ENCODE measurements at regions of chr17 and their contacts with region 1.

Region 1: DNA sequence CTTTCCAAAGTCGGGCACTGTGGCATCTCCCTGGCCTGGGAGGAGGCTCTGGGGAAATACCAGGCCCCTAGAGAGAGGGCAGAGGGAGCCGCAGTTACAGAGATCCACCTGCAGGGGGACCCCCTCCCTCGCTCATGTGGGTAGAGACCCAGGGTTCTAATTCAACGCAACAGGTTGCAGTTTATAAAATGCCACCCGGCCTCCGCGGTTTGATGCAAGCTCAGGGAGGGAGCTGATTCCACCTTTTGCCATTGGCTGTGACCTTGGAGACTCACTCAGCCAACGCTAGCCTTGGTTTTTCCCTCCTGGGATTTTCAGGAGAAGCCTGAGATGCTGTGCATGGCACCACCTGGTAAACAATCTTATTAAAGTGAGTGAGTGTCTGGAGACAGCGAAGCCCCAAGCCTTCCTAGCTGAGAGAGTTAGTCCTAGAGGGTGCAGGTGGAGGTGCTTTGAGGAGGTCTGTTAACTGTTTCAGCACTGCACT is 12.1 kb downstream of the TTLL6 start:
- DNase-seq: peak; percentile 55
- H3K4me3 ChIP-seq: no peak overlapping the region
- H3K27ac ChIP-seq: no peak overlapping the region
- H3K4me1 ChIP-seq: no peaks in the 10 kb centered on the region
- CTCF ChIP-seq: peak; percentile 92

Region 2: GRCh38 chr17:48671697-48672171 is 133.2 kb before region 1 on chr17:
- CTCF ChIA-PET with region 1: no interaction called
- POLR2A ChIA-PET with region 1: interaction called, 11 read pairs
- intact Hi-C with region 1: loop called (anchors 5 kb)
- DNase-seq: peak; percentile 38
- H3K4me3 ChIP-seq: no peak overlapping the region
- H3K27ac ChIP-seq: no peak overlapping the region
- H3K4me1 ChIP-seq: no peaks in the 10 kb centered on the region
- CTCF ChIP-seq: peak; percentile 85

Region 3: GRCh38 chr17:48678141-48678971 is 126.6 kb before region 1 on chr17:
- CTCF ChIA-PET with region 1: no interaction called
- POLR2A ChIA-PET with region 1: interaction called, 3 read pairs
- intact Hi-C with region 1: loop called (anchors 5 kb)
- DNase-seq: peak; percentile 54
- H3K4me3 ChIP-seq: no peak overlapping the region
- H3K27ac ChIP-seq: no peak overlapping the region
- H3K4me1 ChIP-seq: no peaks in the 10 kb centered on the region
- CTCF ChIP-seq: peak; percentile 91

Region 4: GRCh38 chr17:48724251-48725003 is 80.5 kb before region 1 on chr17:
- CTCF ChIA-PET with region 1: no interaction called
- POLR2A ChIA-PET with region 1: no interaction called
- intact Hi-C with region 1: loop called (anchors 10 kb)
- DNase-seq: peak; percentile 58
- H3K4me3 ChIP-seq: no peak overlapping the region
- H3K27ac ChIP-seq: no peak overlapping the region
- H3K4me1 ChIP-seq: no peaks in the 10 kb centered on the region
- CTCF ChIP-seq: peak; percentile 81

Region 5: GRCh38 chr17:48973806-48974205 is 168.8 kb after region 1 on chr17:
- CTCF ChIA-PET with region 1: no interaction called
- POLR2A ChIA-PET with region 1: no interaction called
- intact Hi-C with region 1: no loop called
- DNase-seq: no peak
- H3K4me3 ChIP-seq: no peak overlapping the region
- H3K27ac ChIP-seq: no peak overlapping the region
- H3K4me1 ChIP-seq: no peaks in the 10 kb centered on the region
- CTCF ChIP-seq: no peak